ENCODE measurements at regions of chr9 and their contacts with region 1.

Region 1: GRCh38 chr9:69771775-69772418 is 12.1 kb upstream of the PTAR1 start:
- DNase-seq: no peak
- ATAC-seq: no peak
- H3K4me3 ChIP-seq: no peak overlapping the region
- H3K27ac ChIP-seq: no peak overlapping the region
- H3K4me1 ChIP-seq: no peaks in the 10 kb centered on the region
- H3K27me3 ChIP-seq: no peaks in the 10 kb centered on the region
- CTCF ChIP-seq: no peak
- POLR2A ChIP-seq: no peak

Region 2: GRCh38 chr9:69822091-69822750 is 50.3 kb after region 1 on chr9:
- intact Hi-C with region 1: loop called in 1 of 10 experiments (anchors 5 kb)
- DNase-seq: no peak
- ATAC-seq: no peak
- H3K4me3 ChIP-seq: no peak overlapping the region
- H3K27ac ChIP-seq: no peak overlapping the region
- H3K4me1 ChIP-seq: peaks cover 0 to 6% (median 1%) of the 10 kb centered on the region in 12 donors
- H3K27me3 ChIP-seq: peaks cover 0 to 27% (median 10%) of the 10 kb centered on the region in 9 donors
- CTCF ChIP-seq: peak in 1 of 12 donors; percentile 6
- POLR2A ChIP-seq: no peak

Region 3: GRCh38 chr9:69877854-69878514 is 106.1 kb after region 1 on chr9:
- intact Hi-C with region 1: no loop called
- DNase-seq: no peak
- ATAC-seq: peak in 3 of 4 donors; percentile 48 to 67 (median 52)
- H3K4me3 ChIP-seq: no peak overlapping the region
- H3K27ac ChIP-seq: no peak overlapping the region
- H3K4me1 ChIP-seq: peaks cover 0 to 14% (median 0%) of the 10 kb centered on the region in 12 donors
- H3K27me3 ChIP-seq: no peaks in the 10 kb centered on the region
- CTCF ChIP-seq: peak; percentile 39 to 69 (median 55)
- POLR2A ChIP-seq: no peak

Region 4: GRCh38 chr9:70250221-70250620 is 478.3 kb after region 1 on chr9:
- intact Hi-C with region 1: no loop called
- DNase-seq: no peak
- ATAC-seq: no peak
- H3K4me3 ChIP-seq: no peak overlapping the region
- H3K27ac ChIP-seq: no peak overlapping the region
- H3K4me1 ChIP-seq: no peaks in the 10 kb centered on the region
- H3K27me3 ChIP-seq: no peaks in the 10 kb centered on the region
- CTCF ChIP-seq: no peak
- POLR2A ChIP-seq: no peak